ENCODE measurements at regions of chr1 and their contacts with region 1.

Region 1: GRCh38 chr1:209590405-209590804 is 6.9 kb downstream of the CAMK1G start:
- H3K4me3 ChIP-seq: no peak overlapping the region
- H3K27ac ChIP-seq: no peak overlapping the region
- H3K4me1 ChIP-seq: no peaks in the 10 kb centered on the region
- CTCF ChIP-seq: no peak

Region 2: DNA sequence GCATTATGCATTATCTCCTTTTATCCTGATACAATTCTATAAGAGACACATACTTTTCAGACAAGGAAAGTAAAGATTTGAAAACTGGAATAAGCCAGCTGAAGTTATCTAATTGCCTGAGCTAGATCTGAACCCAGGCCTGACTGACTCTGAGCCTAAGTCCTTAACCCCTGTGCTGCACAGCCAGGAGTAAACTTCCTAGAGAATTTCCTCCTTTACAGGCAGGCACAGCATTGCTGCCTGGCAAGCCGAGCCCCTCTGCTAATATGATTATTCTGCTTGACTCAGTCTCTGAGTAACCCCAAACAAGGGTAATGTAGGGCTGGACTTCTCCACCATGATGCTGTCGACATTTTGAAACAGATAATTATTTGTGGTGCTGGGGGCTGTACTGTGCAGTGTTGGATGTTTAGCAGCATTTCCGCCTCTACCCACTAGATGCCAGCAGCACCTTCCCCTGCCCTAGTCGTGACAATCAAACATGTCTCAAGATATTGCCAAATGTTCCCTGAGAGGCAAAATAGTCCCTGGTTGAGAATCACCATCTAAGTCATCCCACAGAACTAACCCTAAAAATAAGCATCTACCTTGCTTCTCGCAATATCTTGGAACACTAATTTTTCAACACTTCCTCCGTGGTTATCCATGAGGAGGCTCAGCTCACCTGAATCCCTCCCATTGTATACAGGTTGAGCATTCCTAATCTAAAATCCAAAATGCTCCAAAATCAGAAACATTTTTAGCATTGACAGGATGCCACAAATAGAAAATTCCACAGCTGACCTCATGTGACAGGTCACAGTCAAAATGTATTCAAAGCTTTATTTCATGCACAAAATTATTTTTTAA is 11.6 kb after region 1 on chr1:
- CTCF ChIA-PET with region 1: interaction called, 31 read pairs
- POLR2A ChIA-PET with region 1: no interaction called
- H3K4me3 ChIP-seq: no peak overlapping the region
- H3K27ac ChIP-seq: no peak overlapping the region
- H3K4me1 ChIP-seq: no peaks in the 10 kb centered on the region
- CTCF ChIP-seq: peak; percentile 76; the same call in 1 of the 2 replicates

Region 3: GRCh38 chr1:209827384-209828262 is 237.2 kb after region 1 on chr1 and contains the start of gene UTP25:
- CTCF ChIA-PET with region 1: no interaction called
- POLR2A ChIA-PET with region 1: no interaction called
- H3K4me3 ChIP-seq: peak within 1 kb of the TSS; percentile 87
- H3K27ac ChIP-seq: peak within 1 kb of the TSS; percentile 47
- H3K4me1 ChIP-seq: no peaks in the 10 kb centered on the region
- CTCF ChIP-seq: peak; percentile 81